ENCODE measurements at regions of chr7 and their contacts with region 1.

Region 1: GRCh38 chr7:149742075-149742701 is 31.2 kb downstream of the ZNF467 start:
- DNase-seq: peak; percentile 85
- CTCF ChIP-seq: peak; percentile 97

Region 2: GRCh38 chr7:148914208-148914777 is 827.9 kb before region 1 on chr7:
- in situ Hi-C with region 1: no loop called
- DNase-seq: peak; percentile 59
- CTCF ChIP-seq: no peak

Region 3: GRCh38 chr7:149662591-149663095 is 79.5 kb before region 1 on chr7:
- in situ Hi-C with region 1: loop called (anchors 10 kb)
- DNase-seq: peak; percentile 57
- CTCF ChIP-seq: peak; percentile 54